ENCODE measurements at regions of chr1 and their contacts with region 1.

Region 1: GRCh38 chr1:20151906-20152598 is 12.9 kb downstream of the PLA2G2F start:
- DNase-seq: peak; percentile 94
- H3K4me3 ChIP-seq: peak overlapping the region; percentile 45 to 49
- H3K27ac ChIP-seq: no peak overlapping the region
- H3K4me1 ChIP-seq: peaks cover 0 to 5% of the 10 kb centered on the region in 2 experiments; a peak in 1 of 4 replicates
- H3K27me3 ChIP-seq: no peaks in the 10 kb centered on the region; the same call in 1 of the 2 replicates
- CTCF ChIP-seq: peak; percentile 88
- EP300 ChIP-seq: no peak
- RAD21 ChIP-seq: peak; percentile 90

Region 2: GRCh38 chr1:19918057-19918456 is 234.0 kb before region 1 on chr1:
- CTCF ChIA-PET with region 1: interaction called, 243 read pairs
- POLR2A ChIA-PET with region 1: no interaction called
- DNase-seq: peak; percentile 86
- H3K4me3 ChIP-seq: peak overlapping the region in 1 of 2 experiments; percentile 30; a peak in 1 of 4 replicates
- H3K27ac ChIP-seq: no peak overlapping the region
- H3K4me1 ChIP-seq: peaks cover 0 to 3% of the 10 kb centered on the region in 2 experiments; a peak in 1 of 4 replicates
- H3K27me3 ChIP-seq: no peaks in the 10 kb centered on the region
- CTCF ChIP-seq: peak; percentile 95
- EP300 ChIP-seq: no peak
- RAD21 ChIP-seq: peak; percentile 94

Region 3: DNA sequence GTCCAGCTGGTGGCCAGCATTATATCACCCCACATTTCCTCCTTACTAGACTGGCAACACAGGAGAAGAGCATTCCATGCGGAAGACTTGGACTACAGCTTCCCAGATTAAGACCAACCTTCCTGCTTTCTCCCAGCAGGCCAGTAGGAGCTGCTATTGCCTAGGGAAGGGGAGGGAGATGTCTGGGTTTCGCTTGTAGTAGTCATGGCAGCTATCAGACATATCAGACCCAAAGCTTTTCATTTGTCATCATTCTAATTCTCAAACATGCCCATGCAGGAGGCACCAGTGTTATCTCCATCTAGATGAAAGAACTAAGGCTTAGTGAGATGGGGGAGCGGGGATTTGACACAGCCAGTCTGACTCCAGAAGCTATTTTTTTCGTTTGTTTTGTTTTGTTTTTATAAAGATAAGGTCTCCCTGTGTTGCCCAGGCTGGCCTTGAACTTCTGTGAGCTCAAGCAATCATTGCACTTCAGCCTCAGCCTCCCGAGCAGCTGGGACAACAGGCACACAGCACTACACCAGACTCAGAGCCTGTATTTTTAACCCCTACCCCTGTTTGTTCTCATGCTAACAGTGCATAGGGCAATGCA is 177.1 kb before region 1 on chr1:
- CTCF ChIA-PET with region 1: interaction called, 103 read pairs
- POLR2A ChIA-PET with region 1: interaction called, 4 read pairs
- DNase-seq: peak; percentile 86
- H3K4me3 ChIP-seq: peak overlapping the region in 1 of 2 experiments; percentile 33; a peak in 2 of 4 replicates
- H3K27ac ChIP-seq: no peak overlapping the region
- H3K4me1 ChIP-seq: 0 out of 4 replicates have a peak, but pooled peaks cover 0 to 2% of the 10 kb centered on the region in 2 experiments
- H3K27me3 ChIP-seq: peaks cover 13% of the 10 kb centered on the region
- CTCF ChIP-seq: peak; percentile 70
- EP300 ChIP-seq: no peak; a peak in 1 of 4 replicates
- RAD21 ChIP-seq: peak; percentile 97

Region 4: GRCh38 chr1:20100632-20101355 is 51.3 kb before region 1 on chr1:
- CTCF ChIA-PET with region 1: interaction called, 22 read pairs
- POLR2A ChIA-PET with region 1: no interaction called
- DNase-seq: peak; percentile 70
- H3K4me3 ChIP-seq: no peak overlapping the region; a peak in 1 of 4 replicates
- H3K27ac ChIP-seq: no peak overlapping the region
- H3K4me1 ChIP-seq: no peaks in the 10 kb centered on the region
- H3K27me3 ChIP-seq: peaks cover 14% of the 10 kb centered on the region; the same call in 1 of the 2 replicates
- CTCF ChIP-seq: peak; percentile 74
- EP300 ChIP-seq: no peak
- RAD21 ChIP-seq: peak; percentile 76

Region 5: DNA sequence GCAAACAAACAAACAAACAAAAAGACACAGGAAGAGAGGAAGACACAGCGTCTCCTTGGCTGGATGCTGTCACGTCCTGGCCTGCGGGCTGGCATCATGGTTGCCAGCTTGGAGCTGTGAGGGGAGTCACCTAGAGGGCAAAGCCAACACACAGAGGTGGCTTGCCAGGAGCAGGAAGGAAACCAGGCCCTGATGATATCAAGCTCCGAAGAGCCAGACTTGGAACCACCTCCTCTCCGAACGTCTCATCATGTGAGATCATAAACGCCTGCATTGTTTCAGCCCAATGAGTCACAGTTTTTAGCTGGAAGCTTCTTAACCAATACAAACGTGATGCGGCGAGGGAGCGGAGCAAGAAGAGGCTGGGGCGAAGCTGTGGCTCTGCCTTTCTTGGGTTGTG is 41.4 kb before region 1 on chr1:
- CTCF ChIA-PET with region 1: interaction called, 10 read pairs
- POLR2A ChIA-PET with region 1: no interaction called
- DNase-seq: no peak
- H3K4me3 ChIP-seq: no peak overlapping the region
- H3K27ac ChIP-seq: peak overlapping the region in 1 of 2 experiments; percentile 5; a peak in 1 of 4 replicates
- H3K4me1 ChIP-seq: no peaks in the 10 kb centered on the region
- H3K27me3 ChIP-seq: no peaks in the 10 kb centered on the region
- CTCF ChIP-seq: no peak
- EP300 ChIP-seq: no peak; a peak in 1 of 4 replicates
- RAD21 ChIP-seq: no peak

Region 6: GRCh38 chr1:20165522-20165951 is 13.5 kb after region 1 on chr1:
- CTCF ChIA-PET with region 1: interaction called, 75 read pairs
- POLR2A ChIA-PET with region 1: no interaction called
- DNase-seq: peak; percentile 60
- H3K4me3 ChIP-seq: no peak overlapping the region; a peak in 1 of 4 replicates
- H3K27ac ChIP-seq: no peak overlapping the region
- H3K4me1 ChIP-seq: no peaks in the 10 kb centered on the region; a peak in 1 of 4 replicates
- H3K27me3 ChIP-seq: no peaks in the 10 kb centered on the region; the same call in 1 of the 2 replicates
- CTCF ChIP-seq: peak; percentile 39
- EP300 ChIP-seq: no peak
- RAD21 ChIP-seq: peak; percentile 52

Region 7: GRCh38 chr1:20174937-20175666 is 23.1 kb after region 1 on chr1:
- CTCF ChIA-PET with region 1: interaction called, 13 read pairs
- POLR2A ChIA-PET with region 1: no interaction called
- DNase-seq: no peak
- H3K4me3 ChIP-seq: no peak overlapping the region
- H3K27ac ChIP-seq: no peak overlapping the region
- H3K4me1 ChIP-seq: no peaks in the 10 kb centered on the region
- H3K27me3 ChIP-seq: no peaks in the 10 kb centered on the region; the same call in 1 of the 2 replicates
- CTCF ChIP-seq: no peak
- EP300 ChIP-seq: no peak
- RAD21 ChIP-seq: no peak

Region 8: DNA sequence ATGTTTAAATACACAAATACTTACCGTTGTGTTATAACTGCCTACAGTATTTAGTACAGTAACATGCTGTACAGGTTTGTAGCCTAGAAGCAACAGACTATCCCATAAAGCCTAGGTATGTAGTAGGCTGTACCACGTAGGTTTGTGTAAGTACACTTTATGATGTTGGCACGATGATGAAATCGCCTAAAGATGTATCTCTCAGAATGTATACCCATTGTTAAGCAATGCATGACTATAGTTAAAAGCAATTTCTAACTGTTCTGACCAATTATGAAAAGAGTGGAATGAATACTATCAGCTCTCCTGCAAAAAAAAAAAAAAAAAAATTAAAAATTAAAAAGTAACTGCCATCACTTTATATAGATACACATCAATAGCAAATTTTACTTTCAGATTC is 623.6 kb after region 1 on chr1:
- CTCF ChIA-PET with region 1: no interaction called
- POLR2A ChIA-PET with region 1: no interaction called
- DNase-seq: no peak
- H3K4me3 ChIP-seq: no peak overlapping the region
- H3K27ac ChIP-seq: no peak overlapping the region
- H3K4me1 ChIP-seq: peaks cover 0 to 2% of the 10 kb centered on the region in 2 experiments; a peak in 2 of 4 replicates
- H3K27me3 ChIP-seq: no peaks in the 10 kb centered on the region
- CTCF ChIP-seq: no peak
- EP300 ChIP-seq: no peak
- RAD21 ChIP-seq: no peak